Heart left ventricle (tissue), 16 donors: ENCODE measurements at regions of chr20 and their contacts with region 1.

Region 1: DNA sequence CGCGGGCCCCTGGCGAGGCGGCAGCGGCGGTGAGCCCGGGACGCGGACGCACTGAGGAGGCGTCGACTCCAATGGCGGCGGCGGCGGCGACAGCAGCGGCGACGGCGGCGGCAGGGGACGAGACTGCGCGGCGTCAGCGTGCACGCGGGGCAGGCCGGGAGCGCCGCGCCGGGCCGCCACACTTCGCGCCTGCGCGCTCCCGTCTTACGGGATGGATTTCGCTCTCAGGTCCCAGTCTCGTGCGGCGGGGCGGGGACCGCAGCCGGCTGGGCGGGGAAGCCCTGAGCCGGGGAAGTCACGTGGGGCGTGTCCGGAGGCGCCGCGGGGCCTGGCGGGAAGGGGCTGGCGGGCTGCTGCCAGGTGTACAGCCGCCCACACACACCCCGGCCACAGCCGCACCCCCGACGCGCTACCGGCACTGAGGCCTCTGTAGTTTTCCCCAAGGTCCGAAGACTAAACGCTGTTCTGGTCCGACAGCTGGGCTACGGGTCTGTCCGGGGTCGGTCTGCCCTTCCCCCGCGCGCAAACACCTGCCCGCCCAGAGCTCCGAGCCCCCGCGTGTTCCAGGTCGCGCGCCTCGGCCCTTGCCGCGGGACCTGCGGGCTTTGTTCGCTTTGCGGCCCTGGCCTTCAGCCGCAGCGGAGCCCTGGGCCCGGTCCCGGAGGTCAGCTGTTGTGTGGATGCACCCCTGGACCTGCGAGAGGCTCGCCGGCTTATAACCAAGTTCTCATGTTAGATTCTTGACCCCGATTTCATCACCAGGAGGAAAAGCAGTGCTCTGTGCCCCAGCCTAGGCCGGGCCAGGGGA is at the start of gene YTHDF1:
- DNase-seq: peak; percentile 97 to 99 (median 98)
- ATAC-seq: peak; percentile 96 to 98 (median 96)
- H3K4me3 ChIP-seq: peak within 1 kb of the TSS; percentile 78 to 100 (median 97)
- H3K27ac ChIP-seq: peak within 1 kb of the TSS in 11 of 12 donors; percentile 75 to 92 (median 86)
- H3K4me1 ChIP-seq: peaks cover 4 to 47% (median 36%) of the 10 kb centered on the region in 12 donors
- H3K27me3 ChIP-seq: peaks cover 0 to 7% (median 0%) of the 10 kb centered on the region in 9 donors
- CTCF ChIP-seq: no peak
- POLR2A ChIP-seq: peak in 1 of 2 donors; percentile 84
- total RNA-seq, gene YTHDF1: 21.4 to 38.2 (median 22.6) TPM

Region 2: GRCh38 chr20:63272584-63273579 is 56.6 kb after region 1 on chr20 and contains the start of gene ARFGAP1:
- intact Hi-C with region 1: loop called in 2 of 10 experiments (anchors 5 kb)
- DNase-seq: peak; percentile 91 to 95 (median 94)
- ATAC-seq: peak; percentile 94 to 98 (median 98)
- H3K4me3 ChIP-seq: peak within 1 kb of the TSS; percentile 76 to 96 (median 88)
- H3K27ac ChIP-seq: peak within 1 kb of the TSS in 11 of 12 donors; percentile 17 to 84 (median 69)
- H3K4me1 ChIP-seq: peaks cover 2 to 29% (median 20%) of the 10 kb centered on the region in 12 donors
- H3K27me3 ChIP-seq: peaks cover 0 to 4% (median 0%) of the 10 kb centered on the region in 9 donors
- CTCF ChIP-seq: no peak
- POLR2A ChIP-seq: peak in 1 of 2 donors; percentile 88
- total RNA-seq, gene ARFGAP1: 14.3 to 51.6 (median 29.2) TPM